ENCODE measurements at regions of chr6 and their contacts with region 1.

Region 1: DNA sequence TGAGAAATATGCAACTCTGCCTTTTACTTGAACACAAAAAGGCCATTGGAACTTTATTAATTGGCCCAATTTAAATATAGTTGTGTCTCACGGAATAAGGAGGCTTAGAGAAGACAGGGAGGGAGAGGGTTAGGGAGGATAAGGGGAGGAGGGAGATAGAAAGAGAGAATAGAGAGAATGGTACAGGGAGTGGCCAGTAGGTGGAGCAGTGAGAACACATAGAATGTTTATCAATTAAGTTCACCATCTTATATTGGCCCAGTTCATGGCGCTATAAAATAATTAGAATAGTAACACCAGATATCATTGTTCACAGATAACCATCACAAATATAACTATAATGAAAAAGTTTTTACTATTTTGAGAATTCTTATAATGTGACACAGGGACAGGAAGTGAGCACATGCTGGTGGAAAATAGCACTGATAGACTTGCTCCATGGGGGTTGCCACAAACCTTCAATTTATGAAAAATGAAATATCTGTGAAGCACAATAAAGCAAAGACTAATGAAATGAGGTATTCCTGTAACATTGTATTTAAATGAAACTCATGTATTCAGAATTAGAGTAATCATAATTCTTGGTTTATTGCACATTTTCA is 374.1 kb upstream of the MANEA start:
- DNase-seq: peak; percentile 47
- H3K4me3 Mint-ChIP-seq: no peak overlapping the region
- H3K27ac Mint-ChIP-seq: no peak overlapping the region
- H3K4me1 Mint-ChIP-seq: no peaks in the 10 kb centered on the region
- H3K27me3 Mint-ChIP-seq: no peaks in the 10 kb centered on the region
- CTCF ChIP-seq: peak; percentile 56

Region 2: DNA sequence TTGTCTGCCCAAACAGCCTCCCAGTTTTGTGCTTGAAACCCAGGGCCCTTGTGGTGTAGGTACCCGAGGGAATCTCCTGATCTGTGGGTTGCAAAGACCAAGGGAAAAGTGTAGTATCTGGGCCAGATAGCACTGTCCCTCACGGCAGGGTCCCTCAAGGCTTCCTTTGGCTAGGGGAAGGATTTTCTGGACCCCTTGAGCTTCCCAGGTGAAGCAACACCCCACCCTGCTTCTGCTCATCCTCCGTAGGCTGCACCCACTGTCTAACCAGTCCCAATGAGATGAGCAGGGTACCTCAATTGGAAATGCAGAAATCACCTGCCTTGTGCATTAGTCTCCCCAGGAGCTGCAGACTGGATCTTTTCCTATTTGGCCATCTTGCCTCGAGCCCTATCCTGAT is 417.7 kb before region 1 on chr6:
- CTCF ChIA-PET with region 1: no interaction called
- intact Hi-C with region 1: no loop called
- DNase-seq: no peak
- H3K4me3 Mint-ChIP-seq: no peak overlapping the region
- H3K27ac Mint-ChIP-seq: no peak overlapping the region
- H3K4me1 Mint-ChIP-seq: no peaks in the 10 kb centered on the region
- H3K27me3 Mint-ChIP-seq: no peaks in the 10 kb centered on the region
- CTCF ChIP-seq: no peak

Region 3: DNA sequence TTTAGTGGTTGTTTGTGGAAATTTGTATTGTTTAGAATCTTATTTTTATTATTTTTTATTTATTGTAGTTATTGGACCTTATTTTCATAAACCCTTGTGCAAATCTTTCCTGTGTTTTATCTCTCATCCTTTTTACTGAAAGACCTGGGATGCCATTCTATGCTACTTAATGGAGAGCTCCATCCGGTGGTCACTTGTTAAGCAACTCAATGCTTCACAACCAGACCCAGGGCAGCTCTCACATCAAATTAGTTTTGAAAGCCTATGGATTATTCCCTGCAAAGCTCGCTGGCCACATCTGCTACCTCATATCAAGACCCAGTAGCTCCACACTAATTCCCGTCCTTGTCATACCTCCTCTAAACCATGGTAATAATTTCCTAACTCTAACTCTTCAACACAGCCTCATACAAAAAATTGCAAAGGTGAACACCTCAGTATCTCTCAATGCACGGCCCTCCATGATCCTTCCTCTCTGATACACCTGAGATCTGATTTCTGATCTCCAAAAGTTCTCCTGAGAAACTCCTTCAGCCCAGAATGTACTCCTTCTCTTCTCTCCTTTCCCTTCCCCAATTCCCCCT is 77.5 kb after region 1 on chr6:
- CTCF ChIA-PET with region 1: interaction called, 6 read pairs
- intact Hi-C with region 1: loop called (anchors 1 kb)
- DNase-seq: peak; percentile 11
- H3K4me3 Mint-ChIP-seq: no peak overlapping the region
- H3K27ac Mint-ChIP-seq: no peak overlapping the region
- H3K4me1 Mint-ChIP-seq: peaks cover 8% of the 10 kb centered on the region
- H3K27me3 Mint-ChIP-seq: no peaks in the 10 kb centered on the region
- CTCF ChIP-seq: no peak

Region 4: GRCh38 chr6:95352064-95352795 is 149.0 kb after region 1 on chr6:
- CTCF ChIA-PET with region 1: no interaction called
- intact Hi-C with region 1: loop called (anchors 1 kb)
- DNase-seq: no peak
- H3K4me3 Mint-ChIP-seq: no peak overlapping the region
- H3K27ac Mint-ChIP-seq: no peak overlapping the region
- H3K4me1 Mint-ChIP-seq: no peaks in the 10 kb centered on the region
- H3K27me3 Mint-ChIP-seq: no peaks in the 10 kb centered on the region
- CTCF ChIP-seq: no peak